ENCODE measurements at regions of chr1 and their contacts with region 1.

Region 1: DNA sequence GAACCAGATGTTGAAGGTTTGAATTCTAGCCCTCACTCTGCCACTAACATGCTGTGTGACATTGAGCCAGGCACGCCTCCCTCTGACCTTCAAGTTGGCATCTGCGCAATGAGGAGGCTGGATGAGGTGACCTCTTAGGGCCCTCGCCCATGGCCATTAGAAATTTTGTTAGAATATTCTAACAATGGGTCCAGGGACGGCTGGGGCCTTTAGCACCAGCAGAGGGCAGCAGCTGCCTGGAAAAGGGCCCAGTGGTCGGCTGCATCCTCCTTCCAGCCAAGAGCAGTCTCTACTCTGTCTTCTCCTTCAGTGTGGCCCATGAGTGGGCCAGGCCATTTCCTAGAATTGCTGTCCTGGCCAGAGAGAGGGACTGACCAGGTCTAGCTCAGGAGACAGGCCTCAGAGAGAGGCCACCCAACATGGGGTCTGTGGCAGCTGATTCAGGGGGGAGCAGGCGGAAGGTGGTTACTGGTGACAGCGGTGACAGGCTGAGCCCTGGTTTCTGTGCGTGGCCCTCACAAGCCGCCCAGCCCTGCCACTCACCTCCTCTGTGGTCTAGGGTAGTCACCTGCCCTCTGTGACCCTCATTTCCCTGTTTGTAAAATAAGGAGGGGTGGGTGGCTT is 101.3 kb upstream of the ACTL8 start:
- DNase-seq: peak; percentile 20 to 43
- ATAC-seq: peak; percentile 21 to 53 (median 47)
- H3K4me3 ChIP-seq: no peak overlapping the region
- H3K27ac ChIP-seq: peak overlapping the region in 7 of 10 donors; percentile 19 to 42 (median 35)
- H3K4me1 ChIP-seq: peaks cover 0 to 16% (median 10%) of the 10 kb centered on the region in 9 donors
- H3K27me3 ChIP-seq: no peaks in the 10 kb centered on the region
- CTCF ChIP-seq: peak; percentile 9 to 73 (median 66)

Region 2: DNA sequence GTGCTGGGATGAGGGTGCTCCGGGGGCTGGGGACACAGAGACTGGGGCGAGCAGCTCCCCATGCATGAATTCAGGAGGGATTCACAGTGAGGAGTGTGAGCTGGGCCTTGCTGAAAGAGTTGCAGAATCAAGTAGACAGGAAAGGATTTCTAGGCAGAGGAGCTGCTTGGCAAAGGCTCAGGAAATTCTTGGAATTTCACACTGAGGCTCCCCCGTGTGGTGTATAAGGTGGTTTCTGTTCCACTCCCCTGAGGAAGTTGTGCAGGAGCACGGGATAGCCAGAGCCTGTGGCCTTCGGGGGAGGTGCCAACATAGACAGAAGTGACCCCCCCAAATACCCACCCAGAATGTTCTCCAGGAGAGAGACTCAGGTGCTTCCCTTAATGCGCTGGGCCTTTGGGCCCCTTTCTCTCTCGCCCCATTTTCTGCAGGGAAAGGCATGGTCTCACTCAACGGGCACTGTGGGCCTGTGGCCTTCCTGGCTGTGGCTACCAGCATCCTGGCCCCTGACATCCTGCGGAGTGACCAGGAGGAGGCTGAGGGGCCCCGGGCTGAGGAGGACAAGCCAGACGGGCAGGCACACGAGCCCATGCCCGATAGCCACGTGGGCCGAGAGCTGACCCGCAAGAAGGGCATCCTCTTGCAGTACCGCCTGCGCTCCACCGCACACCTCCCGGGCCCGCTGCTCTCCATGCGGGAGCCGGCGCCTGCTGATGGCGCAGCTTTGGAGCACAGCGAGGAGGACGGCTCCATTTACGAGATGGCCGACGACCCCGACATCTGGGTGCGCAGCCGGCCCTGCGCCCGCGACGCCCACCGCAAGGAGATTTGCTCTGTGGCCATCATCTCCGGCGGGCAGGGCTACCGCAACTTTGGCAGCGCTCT is 42.8 kb after region 1 on chr1:
- intact Hi-C with region 1: no loop called
- DNase-seq: peak in 1 of 2 donors; percentile 19
- ATAC-seq: peak; percentile 4 to 60 (median 39)
- H3K4me3 ChIP-seq: no peak overlapping the region
- H3K27ac ChIP-seq: no peak overlapping the region
- H3K4me1 ChIP-seq: peaks cover 0 to 13% (median 5%) of the 10 kb centered on the region in 9 donors
- H3K27me3 ChIP-seq: no peaks in the 10 kb centered on the region
- CTCF ChIP-seq: peak in 7 of 9 donors; percentile 21 to 52 (median 39)

Region 3: DNA sequence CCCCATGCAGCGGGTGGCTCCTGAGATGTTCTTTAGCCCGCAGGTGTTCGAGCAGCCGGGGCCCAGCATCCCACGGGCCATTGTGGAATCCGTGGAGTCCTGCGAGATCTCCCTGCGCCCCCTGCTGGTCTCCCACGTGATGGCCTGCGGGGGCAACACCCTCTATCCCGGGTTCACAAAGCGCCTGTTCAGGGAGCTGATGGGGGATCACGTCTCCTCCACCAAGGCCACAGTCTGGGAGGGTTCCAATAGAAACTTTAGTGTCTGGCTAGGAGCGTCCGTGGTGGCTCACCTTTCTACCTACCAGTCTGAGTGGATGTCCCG is 172.3 kb after region 1 on chr1:
- intact Hi-C with region 1: loop called in 1 of 10 experiments (anchors 5 kb)
- DNase-seq: peak in 1 of 2 donors; percentile 57
- ATAC-seq: peak in 7 of 8 donors; percentile 19 to 45 (median 30)
- H3K4me3 ChIP-seq: no peak overlapping the region
- H3K27ac ChIP-seq: no peak overlapping the region
- H3K4me1 ChIP-seq: peaks cover 0 to 17% (median 0%) of the 10 kb centered on the region in 9 donors
- H3K27me3 ChIP-seq: peaks cover 0 to 29% (median 7%) of the 10 kb centered on the region in 7 donors
- CTCF ChIP-seq: peak; percentile 35 to 71 (median 62)

Region 4: GRCh38 chr1:18091660-18092446 is 438.0 kb after region 1 on chr1:
- intact Hi-C with region 1: loop called in 1 of 10 experiments (anchors 10 kb)
- DNase-seq: no peak
- ATAC-seq: peak in 1 of 8 donors; percentile 65
- H3K4me3 ChIP-seq: no peak overlapping the region
- H3K27ac ChIP-seq: no peak overlapping the region
- H3K4me1 ChIP-seq: no peaks in the 10 kb centered on the region
- H3K27me3 ChIP-seq: peaks cover 0 to 84% (median 55%) of the 10 kb centered on the region in 7 donors
- CTCF ChIP-seq: no peak

Region 5: GRCh38 chr1:18581420-18581880 is 927.6 kb after region 1 on chr1:
- intact Hi-C with region 1: loop called in 1 of 10 experiments (anchors 10 kb)
- DNase-seq: peak in 1 of 2 donors; percentile 23
- ATAC-seq: peak in 3 of 8 donors; percentile 34 to 47 (median 45)
- H3K4me3 ChIP-seq: no peak overlapping the region
- H3K27ac ChIP-seq: no peak overlapping the region
- H3K4me1 ChIP-seq: peaks cover 0 to 15% (median 0%) of the 10 kb centered on the region in 9 donors
- H3K27me3 ChIP-seq: peaks cover 0 to 29% (median 19%) of the 10 kb centered on the region in 7 donors
- CTCF ChIP-seq: peak; percentile 27 to 75 (median 66)